Mammary epithelial cell (primary cell): ENCODE measurements at regions of chr22 and their contacts with region 1.

Region 1: DNA sequence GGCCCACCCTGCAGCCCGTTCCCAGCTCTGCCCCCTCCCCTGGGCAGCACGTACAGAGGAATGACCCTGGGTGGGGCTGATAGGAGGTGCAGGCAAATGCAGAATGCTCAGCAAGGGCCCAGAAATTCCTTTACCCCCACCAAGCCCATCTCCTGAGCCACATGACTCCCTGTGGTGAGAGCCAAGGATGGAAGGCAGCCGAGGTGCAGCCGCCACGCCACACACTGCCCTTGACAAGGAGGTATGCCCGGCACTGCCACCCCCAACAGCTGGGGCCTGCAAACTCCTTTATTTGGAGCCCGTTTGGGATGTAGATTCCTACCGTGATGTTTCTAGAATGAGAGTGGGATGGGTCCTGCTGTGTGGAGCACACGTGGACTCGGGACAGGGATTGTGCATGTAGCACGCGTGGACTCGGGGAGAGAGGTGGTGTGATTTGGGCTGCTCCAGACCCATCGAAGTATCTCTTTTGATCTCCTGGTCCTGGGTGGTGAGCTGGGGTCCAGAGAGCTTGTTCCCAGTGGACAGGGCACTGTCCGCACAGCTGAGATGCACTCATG is 12.9 kb downstream of the GTSE1 start:
- DNase-seq: no peak
- H3K4me3 ChIP-seq: no peak overlapping the region
- H3K27ac ChIP-seq: no peak overlapping the region
- H3K4me1 ChIP-seq: peaks cover 5% of the 10 kb centered on the region
- H3K27me3 ChIP-seq: no peaks in the 10 kb centered on the region
- CTCF ChIP-seq: no peak

Region 2: GRCh38 chr22:46122511-46122971 is 187.1 kb before region 1 on chr22:
- CTCF ChIA-PET with region 1: no interaction called
- dilution Hi-C with region 1: no loop called
- in situ Hi-C with region 1: loop called in 1 of 2 experiments (anchors 5 kb)
- intact Hi-C with region 1: loop called (anchors 1 kb)
- DNase-seq: no peak
- H3K4me3 ChIP-seq: no peak overlapping the region
- H3K27ac ChIP-seq: no peak overlapping the region
- H3K4me1 ChIP-seq: peaks cover 11% of the 10 kb centered on the region
- H3K27me3 ChIP-seq: no peaks in the 10 kb centered on the region
- CTCF ChIP-seq: peak; percentile 68 to 86

Region 3: DNA sequence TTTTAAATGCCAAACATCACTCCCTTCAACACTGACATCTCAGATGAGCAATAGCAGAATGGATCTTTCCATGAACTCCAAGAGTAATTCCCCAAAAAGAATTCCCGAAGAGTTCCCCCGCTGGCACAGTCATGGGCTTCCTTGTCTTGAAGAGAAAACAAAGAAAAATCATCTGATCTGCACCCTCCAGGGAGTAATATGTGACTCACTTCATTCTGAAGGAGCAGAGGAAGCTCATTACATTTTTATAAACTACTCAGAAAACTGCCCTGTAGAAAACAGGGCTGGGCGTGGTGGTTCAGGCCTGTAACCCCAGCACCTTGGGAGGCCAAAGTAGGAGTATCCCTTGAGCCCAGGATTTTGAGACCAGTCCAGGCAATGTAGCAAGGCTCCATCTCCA is 192.1 kb after region 1 on chr22:
- CTCF ChIA-PET with region 1: no interaction called
- dilution Hi-C with region 1: no loop called
- in situ Hi-C with region 1: no loop called
- intact Hi-C with region 1: no loop called
- DNase-seq: peak; percentile 83
- H3K4me3 ChIP-seq: no peak overlapping the region
- H3K27ac ChIP-seq: peak overlapping the region; percentile 33
- H3K4me1 ChIP-seq: peaks cover 40% of the 10 kb centered on the region
- H3K27me3 ChIP-seq: no peaks in the 10 kb centered on the region
- CTCF ChIP-seq: no peak